ENCODE measurements at regions of chr14 and their contacts with region 1.

Region 1: GRCh38 chr14:88189417-88190191 is 133.5 kb downstream of the KCNK10 start:
- DNase-seq: peak; percentile 64
- H3K4me3 Mint-ChIP-seq: no peak overlapping the region
- H3K27ac Mint-ChIP-seq: no peak overlapping the region
- H3K4me1 Mint-ChIP-seq: peaks cover 4% of the 10 kb centered on the region
- H3K27me3 Mint-ChIP-seq: peaks cover 20% of the 10 kb centered on the region

Region 2: DNA sequence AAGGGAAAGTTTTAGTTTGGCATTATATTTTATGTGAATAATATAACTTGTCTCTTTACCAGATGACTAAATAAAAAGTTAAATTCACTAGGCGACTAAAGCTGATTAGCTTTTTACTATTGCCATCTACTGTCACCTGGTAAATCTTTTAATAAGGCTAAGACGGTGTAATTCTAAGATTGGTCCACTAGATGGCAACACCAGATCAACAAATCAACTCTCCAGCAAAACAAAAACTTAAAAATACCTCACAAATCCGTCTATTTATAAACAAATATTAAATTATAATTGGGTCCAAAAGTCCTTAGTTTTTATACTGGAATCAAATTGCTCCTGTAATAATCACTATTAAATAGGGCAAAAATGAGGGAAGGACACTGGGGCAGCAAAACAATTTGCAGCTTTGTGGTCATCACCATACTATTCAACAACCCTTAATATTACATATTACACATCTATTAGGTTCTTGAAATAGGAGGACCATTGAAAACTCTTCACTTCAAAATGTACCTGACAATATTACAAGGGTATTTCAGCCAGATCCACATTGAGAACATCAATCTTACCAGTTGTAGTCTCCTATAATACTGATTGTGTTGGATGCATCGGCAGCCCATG is 244.5 kb before region 1 on chr14:
- CTCF ChIA-PET with region 1: interaction called, 27 read pairs
- POLR2A ChIA-PET with region 1: no interaction called
- intact Hi-C with region 1: no loop called
- DNase-seq: no peak
- H3K4me3 Mint-ChIP-seq: no peak overlapping the region
- H3K27ac Mint-ChIP-seq: no peak overlapping the region
- H3K4me1 Mint-ChIP-seq: no peaks in the 10 kb centered on the region
- H3K27me3 Mint-ChIP-seq: no peaks in the 10 kb centered on the region

Region 3: GRCh38 chr14:88013750-88014349 is 175.8 kb before region 1 on chr14:
- CTCF ChIA-PET with region 1: interaction called, 10 read pairs
- POLR2A ChIA-PET with region 1: no interaction called
- intact Hi-C with region 1: no loop called
- DNase-seq: peak; percentile 48
- H3K4me3 Mint-ChIP-seq: no peak overlapping the region
- H3K27ac Mint-ChIP-seq: no peak overlapping the region
- H3K4me1 Mint-ChIP-seq: peaks cover 56% of the 10 kb centered on the region
- H3K27me3 Mint-ChIP-seq: no peaks in the 10 kb centered on the region

Region 4: DNA sequence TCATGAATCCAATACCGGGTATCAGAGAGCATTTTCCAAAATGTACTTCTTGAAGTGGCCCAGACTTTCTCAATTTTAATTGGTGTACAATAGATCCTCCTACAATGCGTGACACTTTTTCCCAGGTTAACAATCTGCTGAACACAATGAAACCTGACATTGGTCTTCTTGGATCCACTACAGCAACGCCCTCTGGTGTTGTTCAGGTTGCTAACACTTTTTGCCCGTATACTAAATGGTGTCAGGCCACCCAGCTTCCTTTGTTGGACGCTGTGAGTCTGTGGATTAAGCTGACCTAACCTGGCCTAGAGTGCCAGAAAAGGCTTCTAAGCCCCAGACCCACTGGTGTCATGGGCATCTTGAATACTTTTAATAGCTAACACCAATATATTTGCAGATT is 44.3 kb after region 1 on chr14:
- CTCF ChIA-PET with region 1: interaction called, 46 read pairs
- POLR2A ChIA-PET with region 1: no interaction called
- intact Hi-C with region 1: loop called (anchors 1 kb)
- DNase-seq: peak; percentile 10
- H3K4me3 Mint-ChIP-seq: no peak overlapping the region
- H3K27ac Mint-ChIP-seq: no peak overlapping the region
- H3K4me1 Mint-ChIP-seq: no peaks in the 10 kb centered on the region
- H3K27me3 Mint-ChIP-seq: peaks cover 6% of the 10 kb centered on the region

Region 5: DNA sequence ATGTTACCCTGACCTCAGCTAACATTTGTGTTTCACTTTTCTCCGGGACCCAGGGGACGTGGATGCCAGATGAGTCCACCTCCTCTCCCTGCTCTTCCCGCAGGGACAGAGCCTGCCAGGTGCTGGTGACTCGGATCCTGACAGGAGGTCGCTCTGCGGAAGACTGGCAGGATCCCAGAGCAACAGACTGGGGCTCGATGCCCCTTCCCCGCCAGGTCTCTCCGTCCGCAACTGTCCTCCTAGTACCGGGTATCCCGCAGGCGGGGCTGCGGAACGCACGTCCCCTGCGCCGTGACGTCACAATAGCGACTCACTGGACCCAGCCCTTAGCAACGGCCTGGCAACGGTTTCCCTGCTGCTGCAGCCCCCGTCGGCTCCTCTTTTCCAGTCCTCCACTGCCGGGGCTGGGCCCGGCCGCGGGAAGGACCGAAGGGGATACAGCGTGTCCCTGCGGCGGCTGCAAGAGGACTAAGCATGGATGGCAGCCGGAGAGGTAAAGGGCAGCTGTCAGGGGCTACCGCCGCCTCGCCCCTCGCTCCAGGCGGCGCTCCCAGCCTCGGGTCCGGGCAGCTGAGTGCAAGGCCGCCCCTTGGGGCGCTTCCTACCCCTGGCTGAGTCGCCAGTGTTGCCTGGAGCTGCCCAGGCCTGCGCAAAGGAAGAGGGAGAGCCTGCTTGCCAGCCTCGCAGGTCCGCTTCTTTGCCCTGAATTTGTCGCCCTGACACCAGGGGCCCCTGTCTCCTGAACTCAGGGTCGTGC is 195.9 kb after region 1 on chr14 and contains the start of gene SPATA7:
- CTCF ChIA-PET with region 1: interaction called, 3 read pairs
- POLR2A ChIA-PET with region 1: no interaction called
- intact Hi-C with region 1: loop called (anchors 10 kb)
- DNase-seq: peak; percentile 90
- H3K4me3 Mint-ChIP-seq: peak within 1 kb of the TSS; percentile 95
- H3K27ac Mint-ChIP-seq: peak within 1 kb of the TSS; percentile 76
- H3K4me1 Mint-ChIP-seq: peaks cover 14% of the 10 kb centered on the region
- H3K27me3 Mint-ChIP-seq: no peaks in the 10 kb centered on the region
- total RNA-seq, gene SPATA7: 4.2 to 4.5 TPM

Measured in activated CD4-positive, alpha-beta memory T cell treated with anti-CD3 and anti-CD28 coated beads for 36 hours (primary cell).